ENCODE measurements at regions of chr15 and their contacts with region 1.

Region 1: DNA sequence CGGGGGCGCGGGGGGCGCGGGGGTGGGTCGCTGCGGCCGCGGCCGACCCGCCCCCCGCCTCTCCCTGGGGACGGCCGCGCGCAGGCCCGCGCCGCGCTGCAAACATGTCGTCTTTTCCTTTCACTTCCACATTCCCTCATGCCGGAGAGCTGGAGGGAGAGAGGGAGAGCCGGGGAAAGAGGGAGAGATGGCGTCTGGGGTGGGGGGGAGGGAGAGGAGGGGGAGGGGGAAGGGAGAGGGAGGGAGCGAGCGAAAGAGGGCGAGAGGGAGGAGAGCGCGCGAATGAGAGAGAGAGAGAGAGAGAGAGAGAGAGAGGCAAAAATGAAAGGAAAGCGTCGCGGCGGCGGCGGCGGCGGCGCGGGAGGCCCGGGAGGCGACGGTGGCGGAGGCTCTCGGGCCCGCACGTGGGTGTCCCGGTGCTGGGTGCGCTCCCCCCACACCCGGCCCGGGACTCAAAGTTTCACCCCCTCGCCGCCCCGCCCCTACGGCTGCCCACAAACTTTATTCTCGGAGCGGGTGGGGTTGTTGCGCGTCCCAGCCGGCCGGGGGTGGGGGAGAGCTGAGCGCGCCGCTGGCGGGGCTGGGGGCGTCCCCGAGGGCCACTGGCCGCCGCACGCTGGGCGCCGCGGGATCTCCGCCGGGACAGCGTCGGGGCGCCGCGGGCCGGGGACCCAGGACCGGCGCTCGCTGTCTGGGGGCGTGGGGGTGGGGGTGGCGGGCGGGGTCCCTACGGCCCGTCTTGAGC is 731 bp downstream of the ZNF710 start:
- DNase-seq: peak; percentile 53
- H3K4me3 ChIP-seq: peak overlapping the region; percentile 89 to 90
- H3K27ac ChIP-seq: peak overlapping the region; percentile 90 to 93
- H3K4me1 ChIP-seq: no peaks in the 10 kb centered on the region
- H3K27me3 ChIP-seq: no peaks in the 10 kb centered on the region
- CTCF ChIP-seq: no peak
- POLR2A ChIP-seq: no peak

Region 2: GRCh38 chr15:89893696-89894455 is 108.0 kb before region 1 on chr15 and contains the start of gene AP3S2:
- intact Hi-C with region 1: no loop called
- DNase-seq: peak; percentile 89
- H3K4me3 ChIP-seq: peak within 1 kb of the TSS; percentile 62 to 86
- H3K27ac ChIP-seq: peak within 1 kb of the TSS; percentile 90 to 91
- H3K4me1 ChIP-seq: no peaks in the 10 kb centered on the region
- H3K27me3 ChIP-seq: no peaks in the 10 kb centered on the region
- CTCF ChIP-seq: peak in 1 of 4 experiments; percentile 17
- POLR2A ChIP-seq: peak; percentile 63
- total RNA-seq, gene AP3S2: 43.7 to 44.7 TPM

Region 3: GRCh38 chr15:90047956-90048575 is 46.2 kb after region 1 on chr15:
- intact Hi-C with region 1: no loop called
- DNase-seq: peak; percentile 61
- H3K4me3 ChIP-seq: no peak overlapping the region
- H3K27ac ChIP-seq: peak overlapping the region; percentile 77 to 84
- H3K4me1 ChIP-seq: peaks cover 22% of the 10 kb centered on the region
- H3K27me3 ChIP-seq: no peaks in the 10 kb centered on the region
- CTCF ChIP-seq: no peak
- POLR2A ChIP-seq: no peak

Region 4: DNA sequence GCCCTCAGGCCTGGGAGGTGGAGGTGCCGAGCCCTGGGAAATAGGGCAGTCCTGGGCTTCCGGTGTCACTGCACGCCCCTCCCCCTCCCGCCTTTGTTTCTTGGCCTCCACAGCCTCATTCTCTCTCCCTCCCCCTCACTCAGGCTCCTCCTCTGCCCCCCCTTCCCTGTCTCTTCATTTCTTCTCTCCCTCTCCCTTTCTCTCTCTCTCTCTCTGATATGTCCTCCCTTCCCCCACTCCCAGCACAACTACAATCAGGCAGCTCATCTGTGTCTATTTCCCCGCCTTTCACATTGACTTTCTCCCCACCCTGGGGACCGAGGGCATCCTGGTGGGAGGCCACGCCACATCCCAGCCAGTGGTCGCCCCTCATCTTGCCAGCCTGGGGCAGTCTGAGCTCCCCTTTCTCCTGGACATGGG is 60.2 kb after region 1 on chr15:
- intact Hi-C with region 1: loop called (anchors 5 kb)
- DNase-seq: peak; percentile 56
- H3K4me3 ChIP-seq: no peak overlapping the region
- H3K27ac ChIP-seq: peak overlapping the region; percentile 52 to 73
- H3K4me1 ChIP-seq: peaks cover 18% of the 10 kb centered on the region
- H3K27me3 ChIP-seq: no peaks in the 10 kb centered on the region
- CTCF ChIP-seq: no peak
- POLR2A ChIP-seq: no peak

Region 5: GRCh38 chr15:90082140-90082715 is 80.4 kb after region 1 on chr15:
- intact Hi-C with region 1: loop called (anchors 5 kb)
- DNase-seq: no peak
- H3K4me3 ChIP-seq: no peak overlapping the region
- H3K27ac ChIP-seq: peak overlapping the region in 1 of 2 donors; percentile 23
- H3K4me1 ChIP-seq: no peaks in the 10 kb centered on the region
- H3K27me3 ChIP-seq: no peaks in the 10 kb centered on the region
- CTCF ChIP-seq: no peak
- POLR2A ChIP-seq: no peak

Region 6: DNA sequence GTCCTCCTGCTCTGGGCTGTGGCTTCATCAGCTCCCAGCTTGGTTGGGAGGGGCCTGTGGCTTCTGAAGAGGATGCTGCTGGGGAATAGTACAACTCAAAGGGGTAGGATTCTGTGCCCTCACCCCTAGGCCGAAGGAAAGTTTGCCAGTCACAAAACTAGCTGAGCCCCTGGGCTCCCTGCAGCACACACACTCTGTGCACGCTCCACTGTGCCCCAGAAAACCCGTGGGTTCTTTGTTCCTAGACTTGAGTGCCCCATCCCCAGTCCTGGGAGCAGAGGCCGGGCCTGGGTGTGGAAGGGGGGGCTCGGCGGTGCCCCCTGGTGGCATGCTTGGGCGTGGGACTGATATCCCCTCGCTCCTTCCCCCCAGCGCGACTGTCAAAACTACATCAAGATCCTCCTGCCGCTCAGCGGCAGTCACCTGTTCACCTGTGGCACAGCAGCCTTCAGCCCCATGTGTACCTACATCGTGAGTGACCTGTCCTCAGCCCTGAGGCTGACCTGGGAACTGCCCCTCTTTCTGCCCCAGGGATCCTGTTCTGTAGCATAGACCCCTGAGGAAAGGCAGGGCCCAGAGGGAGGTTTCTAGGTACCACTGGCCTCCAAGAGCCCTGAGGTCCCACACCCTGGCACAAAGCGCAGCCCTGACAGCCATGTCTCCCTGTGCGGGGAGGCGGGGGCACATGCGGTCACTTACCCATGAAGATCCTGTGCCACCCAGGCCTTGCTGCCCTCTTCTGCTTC is 217.7 kb after region 1 on chr15:
- intact Hi-C with region 1: loop called (anchors 10 kb)
- DNase-seq: no peak
- H3K4me3 ChIP-seq: no peak overlapping the region
- H3K27ac ChIP-seq: peak overlapping the region in 1 of 2 donors; percentile 29
- H3K4me1 ChIP-seq: peaks cover 2% of the 10 kb centered on the region
- H3K27me3 ChIP-seq: no peaks in the 10 kb centered on the region
- CTCF ChIP-seq: peak; percentile 24 to 69 (median 62)
- POLR2A ChIP-seq: no peak